Activated naive CD4-positive, alpha-beta T cell treated with anti-CD3 and anti-CD28 coated beads for 36 hours (primary cell): ENCODE measurements at regions of chr4 and their contacts with region 1.

Region 1: GRCh38 chr4:88523325-88524129 is at the start of gene PYURF:
- DNase-seq: peak; percentile 85
- H3K4me3 Mint-ChIP-seq: peak within 1 kb of the TSS; percentile 92
- H3K27ac Mint-ChIP-seq: peak within 1 kb of the TSS; percentile 91
- H3K4me1 Mint-ChIP-seq: peaks cover 40% of the 10 kb centered on the region
- H3K27me3 Mint-ChIP-seq: no peaks in the 10 kb centered on the region
- total RNA-seq, gene PYURF: 51.5 to 54.2 TPM

Region 2: DNA sequence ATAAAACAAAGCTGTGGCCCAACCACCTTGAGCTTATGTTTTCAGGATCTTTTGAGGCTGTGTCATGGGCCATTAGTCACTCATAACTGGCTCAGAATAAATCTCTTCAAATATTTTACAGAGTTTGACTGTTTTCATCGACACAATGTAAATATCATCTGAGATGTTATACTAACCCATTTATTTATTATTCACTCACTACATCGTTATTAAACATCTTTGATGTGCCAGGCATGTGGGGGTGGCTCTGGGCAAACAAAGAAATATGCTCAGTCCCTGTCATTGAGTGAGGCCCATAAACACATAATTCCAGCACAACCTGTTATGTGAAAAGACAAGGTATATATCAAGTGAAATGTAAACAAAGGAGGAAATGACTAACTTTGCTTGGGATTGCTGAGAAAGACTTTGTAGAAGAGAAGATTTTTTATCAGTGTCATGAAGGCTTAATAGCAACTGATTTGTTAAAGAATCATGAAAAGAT is 204.6 kb before region 1 on chr4:
- CTCF ChIA-PET with region 1: no interaction called
- intact Hi-C with region 1: no loop called
- DNase-seq: no peak
- H3K4me3 Mint-ChIP-seq: no peak overlapping the region
- H3K27ac Mint-ChIP-seq: no peak overlapping the region
- H3K4me1 Mint-ChIP-seq: peaks cover 15% of the 10 kb centered on the region
- H3K27me3 Mint-ChIP-seq: no peaks in the 10 kb centered on the region

Region 3: DNA sequence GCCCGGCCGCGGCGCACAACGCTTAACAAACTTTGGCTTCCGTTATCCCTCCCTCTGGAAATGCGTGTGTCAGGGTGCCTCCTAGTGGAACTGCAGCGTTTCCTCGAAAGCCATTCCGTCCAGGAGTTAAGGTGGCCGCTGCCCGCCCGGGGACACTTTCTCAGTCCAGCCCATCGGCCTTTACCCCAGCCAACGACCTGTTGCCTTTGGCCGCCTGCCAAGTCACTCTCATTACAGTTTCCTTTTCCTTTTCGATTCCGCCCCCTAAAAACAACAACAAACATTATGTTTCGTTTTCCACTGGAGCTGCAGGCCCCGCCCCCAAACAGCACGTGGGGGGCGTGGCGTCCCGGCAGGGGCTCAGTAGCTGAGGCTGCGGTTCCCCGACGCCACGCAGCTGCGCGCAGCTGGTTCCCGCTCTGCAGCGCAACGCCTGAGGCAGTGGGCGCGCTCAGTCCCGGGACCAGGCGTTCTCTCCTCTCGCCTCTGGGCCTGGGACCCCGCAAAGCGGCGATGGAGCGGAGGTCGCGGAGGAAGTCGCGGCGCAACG is 66.7 kb before region 1 on chr4 and contains the start of gene HERC5:
- CTCF ChIA-PET with region 1: no interaction called
- intact Hi-C with region 1: loop called (anchors 2 kb)
- DNase-seq: peak; percentile 93
- H3K4me3 Mint-ChIP-seq: peak within 1 kb of the TSS; percentile 98
- H3K27ac Mint-ChIP-seq: peak within 1 kb of the TSS; percentile 97
- H3K4me1 Mint-ChIP-seq: peaks cover 5% of the 10 kb centered on the region
- H3K27me3 Mint-ChIP-seq: no peaks in the 10 kb centered on the region
- total RNA-seq, gene HERC5: 38.8 to 39.5 TPM

Region 4: DNA sequence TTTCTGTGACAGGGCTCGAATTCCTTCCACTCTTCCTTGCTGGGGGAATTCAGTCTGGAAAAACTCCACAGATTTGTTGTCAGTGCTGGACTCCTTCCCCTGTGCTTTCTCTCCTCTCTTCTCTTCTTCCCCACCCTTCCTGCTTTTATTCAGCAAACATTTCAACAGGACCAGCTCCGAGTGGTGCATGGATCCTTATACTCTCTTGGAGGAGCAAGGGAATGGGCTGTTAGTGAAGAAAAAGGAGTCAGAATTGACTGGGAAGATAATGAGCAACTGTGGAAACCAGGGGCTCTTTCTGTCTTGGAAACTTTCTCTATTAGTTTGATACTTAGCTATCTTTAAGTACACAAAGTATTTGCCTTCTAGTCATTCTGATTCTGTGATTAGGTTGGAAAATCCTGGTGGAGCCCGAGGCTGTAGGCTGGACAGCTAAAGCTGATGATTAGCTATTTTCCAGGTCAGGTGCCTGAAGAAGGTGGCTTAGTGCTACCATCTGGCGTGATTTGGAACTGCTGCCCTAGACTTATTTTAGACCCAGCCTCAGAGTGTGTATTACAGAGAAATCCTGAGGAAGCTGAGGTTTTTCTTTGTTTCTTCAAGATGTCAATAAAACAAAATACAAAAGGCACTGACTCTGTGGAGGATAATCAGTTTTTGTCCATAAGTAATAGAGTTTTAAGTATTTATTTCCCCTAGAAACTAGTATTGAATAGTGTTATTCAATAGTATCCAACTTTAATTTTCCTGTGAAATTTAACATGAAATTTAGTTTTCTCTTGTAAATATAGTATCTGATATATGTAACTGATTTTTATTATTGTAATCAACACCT is 135.7 kb after region 1 on chr4:
- CTCF ChIA-PET with region 1: interaction called, 16 read pairs
- intact Hi-C with region 1: loop called (anchors 1 kb)
- DNase-seq: peak; percentile 69
- H3K4me3 Mint-ChIP-seq: no peak overlapping the region
- H3K27ac Mint-ChIP-seq: no peak overlapping the region
- H3K4me1 Mint-ChIP-seq: peaks cover 6% of the 10 kb centered on the region
- H3K27me3 Mint-ChIP-seq: no peaks in the 10 kb centered on the region

Region 5: GRCh38 chr4:88792268-88792781 is 268.8 kb after region 1 on chr4:
- CTCF ChIA-PET with region 1: no interaction called
- intact Hi-C with region 1: loop called (anchors 2 kb)
- DNase-seq: peak; percentile 23
- H3K4me3 Mint-ChIP-seq: no peak overlapping the region
- H3K27ac Mint-ChIP-seq: peak overlapping the region; percentile 25
- H3K4me1 Mint-ChIP-seq: peaks cover 19% of the 10 kb centered on the region
- H3K27me3 Mint-ChIP-seq: no peaks in the 10 kb centered on the region

Region 6: DNA sequence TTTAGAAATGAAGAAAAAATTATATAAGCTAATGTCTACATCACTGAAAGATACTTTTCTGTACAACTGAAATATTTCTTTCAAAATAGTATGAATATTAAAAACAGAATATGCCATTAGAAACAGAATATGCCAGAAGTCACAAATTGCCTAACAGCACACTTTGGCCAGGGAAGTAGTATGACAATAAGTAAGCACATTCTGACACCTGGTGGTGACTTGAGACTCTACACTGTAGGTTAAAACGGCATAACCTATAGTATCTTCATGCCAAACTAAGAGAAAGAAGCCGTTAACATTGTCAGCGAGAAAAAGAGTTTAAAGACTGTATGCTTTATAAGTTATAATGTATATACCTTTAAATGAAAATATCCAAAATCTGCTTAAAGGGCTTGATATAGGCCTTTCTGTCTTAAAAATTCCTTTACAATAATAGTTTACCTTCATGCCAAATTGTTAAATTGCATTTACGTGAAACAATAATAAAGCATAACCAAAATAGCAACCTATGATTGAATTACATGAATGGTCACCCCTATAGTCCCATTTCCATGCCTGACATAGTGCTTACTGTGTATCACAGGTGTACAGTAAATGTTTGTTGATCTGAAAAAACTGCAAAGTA is 500.6 kb after region 1 on chr4:
- CTCF ChIA-PET with region 1: interaction called, 9 read pairs
- intact Hi-C with region 1: loop called (anchors 1 kb)
- DNase-seq: peak; percentile 71
- H3K4me3 Mint-ChIP-seq: no peak overlapping the region
- H3K27ac Mint-ChIP-seq: no peak overlapping the region
- H3K4me1 Mint-ChIP-seq: peaks cover 4% of the 10 kb centered on the region
- H3K27me3 Mint-ChIP-seq: no peaks in the 10 kb centered on the region

Region 7: GRCh38 chr4:89110986-89111832 is 587.7 kb after region 1 on chr4 and contains the start of gene TIGD2:
- CTCF ChIA-PET with region 1: no interaction called
- intact Hi-C with region 1: loop called (anchors 5 kb)
- DNase-seq: peak; percentile 81
- H3K4me3 Mint-ChIP-seq: peak within 1 kb of the TSS; percentile 76
- H3K27ac Mint-ChIP-seq: no peak within 1 kb of the TSS
- H3K4me1 Mint-ChIP-seq: peaks cover 11% of the 10 kb centered on the region
- H3K27me3 Mint-ChIP-seq: peaks cover 18% of the 10 kb centered on the region
- total RNA-seq, gene TIGD2: 1.1 to 1.3 TPM

Region 8: DNA sequence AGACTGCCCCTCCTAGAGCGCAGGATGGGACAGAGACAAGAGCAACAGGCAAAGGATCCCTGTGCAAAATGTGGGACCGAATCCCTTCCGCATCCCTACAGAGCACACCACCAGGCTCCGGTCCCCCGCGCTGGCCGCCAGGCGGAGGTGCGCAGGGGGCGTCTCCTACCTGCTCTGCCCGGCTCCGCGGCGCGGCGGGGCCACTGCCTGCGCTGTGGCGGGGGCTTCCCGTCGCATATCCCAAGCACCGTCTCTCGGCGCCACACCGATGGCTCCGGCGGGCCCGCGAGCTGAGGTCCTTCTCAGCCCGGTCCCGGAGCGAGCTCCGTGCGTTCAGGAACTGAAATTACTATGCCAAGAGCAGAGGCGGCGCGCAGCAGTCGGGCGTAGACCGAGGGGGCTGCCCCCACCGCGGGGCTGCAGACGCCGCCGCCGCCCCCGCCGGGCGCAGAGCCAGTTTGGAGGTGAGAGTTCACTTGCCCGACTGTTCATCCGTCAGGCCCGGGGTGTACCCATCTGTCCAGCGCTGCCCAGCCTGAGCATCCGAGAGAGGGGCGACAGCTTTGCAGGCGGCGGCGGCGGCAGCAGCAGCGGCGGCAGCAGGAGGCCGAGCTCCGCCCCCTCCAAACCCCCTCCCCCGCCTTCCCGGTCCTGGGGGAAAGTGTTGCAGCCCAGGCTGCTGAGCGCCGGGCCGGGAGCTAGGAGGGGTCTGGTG is 784.1 kb after region 1 on chr4 and contains the start of gene GPRIN3:
- CTCF ChIA-PET with region 1: no interaction called
- intact Hi-C with region 1: loop called (anchors 10 kb)
- DNase-seq: peak; percentile 75
- H3K4me3 Mint-ChIP-seq: peak within 1 kb of the TSS; percentile 90
- H3K27ac Mint-ChIP-seq: peak within 1 kb of the TSS; percentile 78
- H3K4me1 Mint-ChIP-seq: peaks cover 55% of the 10 kb centered on the region
- H3K27me3 Mint-ChIP-seq: no peaks in the 10 kb centered on the region
- total RNA-seq, gene GPRIN3: 8.6 to 8.8 TPM